ENCODE measurements at regions of chr1 and their contacts with region 1.

Region 1: DNA sequence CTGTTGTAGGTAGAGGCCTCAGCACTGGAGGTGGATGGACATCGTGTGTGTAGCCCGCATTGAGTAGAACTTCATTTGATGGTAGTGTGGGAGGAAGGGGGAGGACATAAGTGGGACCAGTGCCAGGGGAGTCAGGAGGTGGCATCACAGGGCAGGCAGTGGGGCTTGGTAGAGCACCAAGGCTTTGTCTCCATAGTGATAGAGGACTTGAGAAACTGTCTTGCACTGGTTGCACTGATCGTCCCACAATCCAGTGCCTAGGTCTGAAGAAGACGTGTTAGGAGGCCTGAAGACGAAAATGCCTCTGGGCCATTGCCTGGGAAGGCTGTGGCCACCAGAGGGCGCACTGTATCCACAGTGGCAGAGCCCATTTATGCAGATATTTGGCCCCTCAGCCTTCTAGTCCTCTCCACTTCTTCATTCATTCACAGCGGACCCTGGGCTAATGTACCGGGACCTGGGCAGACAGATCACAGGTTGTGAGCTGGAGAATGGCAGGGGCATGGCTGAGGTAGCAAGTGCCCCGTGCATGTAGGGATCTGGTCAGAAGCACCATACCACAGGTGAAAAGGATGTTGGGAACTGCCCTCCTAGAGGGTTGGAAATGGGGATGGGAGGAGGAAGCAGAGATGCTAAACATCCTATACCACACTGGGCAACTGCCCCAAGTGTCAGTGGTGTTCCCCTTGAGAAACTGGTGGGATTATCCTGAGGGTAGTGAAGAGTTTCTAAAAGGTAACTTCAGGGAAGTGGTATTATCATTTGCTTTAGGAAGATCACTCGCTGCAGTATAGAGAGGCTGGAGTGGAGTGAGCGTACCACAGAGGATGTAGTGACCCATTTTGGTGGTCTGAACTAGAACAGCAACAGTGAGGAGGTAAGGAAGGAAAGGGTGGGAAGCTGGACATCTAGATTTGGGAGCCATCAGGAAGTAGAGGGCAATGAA is 95.3 kb downstream of the PIK3R3 start:
- DNase-seq: peak; percentile 76 to 97
- H3K4me3 ChIP-seq: no peak overlapping the region
- H3K27ac ChIP-seq: no peak overlapping the region
- H3K4me1 ChIP-seq: no peaks in the 10 kb centered on the region
- H3K27me3 ChIP-seq: no peaks in the 10 kb centered on the region
- CTCF ChIP-seq: peak; percentile 95 to 99 (median 98)
- EP300 ChIP-seq: no peak
- POLR2A ChIP-seq: peak in 1 of 2 experiments; percentile 72
- RAD21 ChIP-seq: peak; percentile 99

Region 2: DNA sequence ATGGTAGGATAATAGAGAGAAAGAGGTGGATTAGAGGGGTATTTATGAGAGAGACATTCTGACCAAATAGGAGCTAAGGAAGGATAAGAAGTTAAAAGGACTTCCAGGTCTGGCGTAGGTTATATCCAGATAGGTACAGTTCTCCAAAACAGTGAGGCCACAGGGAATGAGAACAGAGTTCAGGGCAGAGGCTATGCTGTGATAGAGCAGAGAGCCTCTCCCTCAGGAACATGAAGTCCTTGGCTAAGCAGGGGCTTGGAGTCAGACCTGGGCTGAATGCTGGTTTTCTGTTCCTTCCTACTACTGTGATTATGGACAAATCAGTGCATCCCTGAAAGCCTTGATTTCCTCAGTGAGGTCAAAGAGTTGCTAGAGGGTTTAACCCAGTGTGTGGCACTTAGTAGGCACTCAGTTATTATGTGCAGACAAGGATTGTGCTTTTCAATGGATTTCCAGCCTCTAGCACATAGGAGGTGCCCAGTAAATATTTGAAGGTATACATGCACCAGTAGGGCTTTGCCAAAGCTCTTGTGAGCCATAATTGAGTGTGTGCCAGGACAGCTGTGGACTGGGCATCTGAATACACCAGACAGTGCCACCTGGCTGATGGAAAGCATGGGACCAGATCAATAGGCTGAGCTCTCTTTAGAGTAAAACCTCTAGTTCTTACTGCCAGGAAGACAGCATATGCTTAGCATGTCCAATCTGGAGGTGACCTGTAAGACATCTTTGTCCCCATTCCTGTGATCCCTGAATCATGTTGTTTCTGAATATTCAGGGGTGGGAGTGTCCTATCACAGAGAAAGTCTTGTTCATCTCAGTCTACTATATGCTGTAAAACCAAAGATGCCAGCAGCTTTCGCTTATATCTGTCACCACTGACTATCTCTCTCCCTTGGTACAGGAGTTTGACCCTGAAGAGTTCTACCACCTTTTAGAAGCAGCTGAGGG is 15.8 kb before region 1 on chr1:
- CTCF ChIA-PET with region 1: interaction called, 15 read pairs
- POLR2A ChIA-PET with region 1: no interaction called
- DNase-seq: no peak
- H3K4me3 ChIP-seq: no peak overlapping the region
- H3K27ac ChIP-seq: no peak overlapping the region
- H3K4me1 ChIP-seq: peaks cover 0 to 4% (median 2%) of the 10 kb centered on the region in 4 experiments; a peak in 5 of 7 replicates
- H3K27me3 ChIP-seq: no peaks in the 10 kb centered on the region
- CTCF ChIP-seq: no peak
- EP300 ChIP-seq: no peak
- POLR2A ChIP-seq: no peak
- RAD21 ChIP-seq: no peak

Region 3: DNA sequence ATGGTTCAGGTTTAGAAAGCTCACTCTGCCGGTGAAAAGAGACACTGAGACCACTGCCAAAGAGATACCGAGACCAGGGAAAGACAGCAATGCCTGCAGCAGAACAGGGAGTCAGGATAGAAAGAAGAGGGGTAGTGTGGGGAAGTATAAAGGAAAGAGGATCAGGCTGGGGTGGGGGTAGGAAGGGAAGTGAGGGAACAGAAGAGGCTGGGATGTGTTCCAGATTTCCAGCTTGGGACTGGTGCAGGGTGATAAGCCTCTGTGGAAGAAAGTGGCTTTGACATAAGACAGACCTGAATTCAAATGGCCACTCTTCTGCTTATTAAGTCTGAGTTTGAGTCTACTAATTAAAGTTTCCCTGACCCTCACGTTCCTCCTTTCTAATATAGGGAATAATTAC is 10.6 kb before region 1 on chr1:
- CTCF ChIA-PET with region 1: interaction called, 17 read pairs
- POLR2A ChIA-PET with region 1: no interaction called
- DNase-seq: no peak
- H3K4me3 ChIP-seq: no peak overlapping the region
- H3K27ac ChIP-seq: no peak overlapping the region
- H3K4me1 ChIP-seq: no peaks in the 10 kb centered on the region
- H3K27me3 ChIP-seq: no peaks in the 10 kb centered on the region
- CTCF ChIP-seq: no peak
- EP300 ChIP-seq: no peak
- POLR2A ChIP-seq: no peak
- RAD21 ChIP-seq: no peak

Region 4: DNA sequence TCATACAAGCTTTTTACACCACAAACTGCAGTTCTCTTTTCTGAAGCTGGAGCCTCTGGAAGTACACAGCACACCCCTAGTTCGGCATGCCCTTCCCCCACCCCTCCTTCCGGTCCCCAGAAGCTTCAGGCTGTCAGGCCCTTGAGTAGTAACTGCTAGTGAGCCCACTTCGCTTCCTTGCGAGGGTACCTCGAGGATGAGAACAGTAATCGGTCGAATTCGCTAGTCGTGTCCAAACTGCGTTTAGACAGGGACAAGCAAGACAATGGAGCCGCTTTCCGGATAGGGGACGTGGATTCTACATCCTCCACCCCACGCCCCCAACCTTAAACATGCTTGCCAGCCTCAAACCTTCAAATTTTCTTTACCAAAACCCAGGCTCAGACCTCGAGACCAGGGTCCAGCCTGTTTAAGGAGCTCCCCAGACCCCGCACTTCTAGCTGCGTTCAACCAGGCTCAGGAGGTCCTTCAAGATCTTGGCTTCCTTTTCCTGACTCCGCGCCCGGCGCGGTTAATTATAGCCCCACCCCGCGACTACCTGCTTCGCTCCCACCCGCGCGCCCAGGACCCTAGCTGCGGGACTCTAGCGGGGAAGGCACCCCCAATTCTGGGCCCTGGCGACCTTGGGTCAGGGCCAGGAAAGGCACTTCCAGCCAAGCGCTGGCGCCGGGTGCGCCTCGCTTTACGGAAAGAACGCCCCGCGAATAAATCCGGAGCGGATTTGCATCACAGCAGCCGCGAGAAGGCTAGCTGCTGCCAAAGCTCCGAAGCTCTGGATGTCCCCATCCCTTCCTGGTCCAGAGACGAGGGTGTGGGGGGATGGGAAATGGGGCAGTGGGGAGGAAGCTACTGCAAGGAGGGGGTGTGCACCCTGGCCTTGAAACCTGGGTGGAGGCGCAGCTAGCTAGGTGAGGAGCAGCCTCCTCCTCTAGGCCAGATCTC is 129.6 kb after region 1 on chr1:
- CTCF ChIA-PET with region 1: interaction called, 67 read pairs
- POLR2A ChIA-PET with region 1: interaction called, 3 read pairs
- DNase-seq: peak in 1 of 2 experiments; percentile 70
- H3K4me3 ChIP-seq: peak overlapping the region; percentile 6 to 51 (median 20); a peak in 5 of 8 replicates
- H3K27ac ChIP-seq: no peak overlapping the region
- H3K4me1 ChIP-seq: peaks cover 0 to 20% (median 7%) of the 10 kb centered on the region in 4 experiments; a peak in 5 of 7 replicates
- H3K27me3 ChIP-seq: peaks cover 0 to 14% (median 9%) of the 10 kb centered on the region in 4 experiments; a peak in 5 of 7 replicates
- CTCF ChIP-seq: no peak
- EP300 ChIP-seq: no peak
- POLR2A ChIP-seq: no peak
- RAD21 ChIP-seq: no peak

Region 5: GRCh38 chr1:46173361-46173856 is 136.2 kb after region 1 on chr1:
- CTCF ChIA-PET with region 1: interaction called, 67 read pairs
- POLR2A ChIA-PET with region 1: interaction called, 4 read pairs
- DNase-seq: no peak
- H3K4me3 ChIP-seq: no peak overlapping the region
- H3K27ac ChIP-seq: no peak overlapping the region
- H3K4me1 ChIP-seq: peaks cover 3 to 19% (median 12%) of the 10 kb centered on the region in 4 experiments
- H3K27me3 ChIP-seq: peaks cover 0 to 1% (median under 1%) of the 10 kb centered on the region in 4 experiments; a peak in 3 of 7 replicates
- CTCF ChIP-seq: peak in 1 of 3 experiments; percentile 14; a peak in 1 of 4 replicates
- EP300 ChIP-seq: no peak
- POLR2A ChIP-seq: no peak
- RAD21 ChIP-seq: peak in 1 of 2 experiments; percentile 23; a peak in 3 of 4 replicates

Region 6: DNA sequence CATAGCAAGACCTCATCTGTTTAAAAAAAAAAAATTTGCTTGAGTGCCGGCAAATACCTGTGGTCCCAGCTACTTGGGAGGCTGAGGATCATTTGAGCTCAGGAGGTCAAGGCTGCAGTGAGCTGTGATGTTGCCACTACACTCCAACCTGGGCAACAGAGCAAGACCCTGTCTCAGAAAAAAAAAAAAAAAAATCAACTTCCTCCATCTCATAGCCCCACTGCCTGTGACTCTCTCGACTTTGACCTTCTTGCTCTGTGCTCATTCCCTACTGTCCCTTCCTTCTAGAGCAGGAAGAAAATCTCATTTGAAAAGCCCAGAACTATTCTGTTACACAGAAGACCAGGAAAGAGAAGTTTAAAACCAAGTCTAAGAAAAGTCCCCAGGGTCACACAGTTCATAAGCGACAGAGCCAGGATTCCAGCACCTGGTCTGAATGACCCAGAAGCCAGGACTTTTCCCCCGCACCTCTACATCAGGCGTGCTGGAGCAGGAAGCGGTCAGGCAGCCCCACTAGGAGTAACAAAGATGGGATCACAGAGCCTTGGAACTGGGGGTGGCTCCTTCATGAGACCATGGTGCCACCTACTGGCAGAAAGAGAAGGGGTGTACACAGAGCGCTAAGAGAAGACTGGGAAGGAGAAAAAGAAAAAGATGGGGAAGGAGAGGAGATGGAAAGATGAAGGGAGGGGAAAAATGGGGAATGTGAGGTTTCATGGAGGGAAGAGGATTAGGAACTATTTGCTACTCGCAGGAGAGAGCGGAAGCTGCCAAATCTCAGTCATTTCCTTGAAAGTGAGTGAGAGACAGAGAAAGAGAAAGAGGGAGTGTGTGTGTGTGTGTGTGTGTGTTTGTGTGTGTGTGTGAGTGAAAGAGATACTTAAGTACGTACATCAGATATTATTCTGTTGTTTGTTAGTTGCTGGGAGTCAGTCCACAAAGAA is 142.2 kb after region 1 on chr1:
- CTCF ChIA-PET with region 1: interaction called, 128 read pairs
- POLR2A ChIA-PET with region 1: interaction called, 9 read pairs
- DNase-seq: peak; percentile 44 to 85
- H3K4me3 ChIP-seq: no peak overlapping the region
- H3K27ac ChIP-seq: no peak overlapping the region
- H3K4me1 ChIP-seq: peaks cover 2 to 15% (median 6%) of the 10 kb centered on the region in 4 experiments
- H3K27me3 ChIP-seq: no peaks in the 10 kb centered on the region; a peak in 1 of 7 replicates
- CTCF ChIP-seq: peak; percentile 62 to 93 (median 87)
- EP300 ChIP-seq: peak in 1 of 2 experiments; percentile 16; a peak in 1 of 3 replicates
- POLR2A ChIP-seq: no peak
- RAD21 ChIP-seq: peak; percentile 97 to 98